GM13977 (cell line): ENCODE measurements at regions of chr6 and their contacts with region 1.

Region 1: DNA sequence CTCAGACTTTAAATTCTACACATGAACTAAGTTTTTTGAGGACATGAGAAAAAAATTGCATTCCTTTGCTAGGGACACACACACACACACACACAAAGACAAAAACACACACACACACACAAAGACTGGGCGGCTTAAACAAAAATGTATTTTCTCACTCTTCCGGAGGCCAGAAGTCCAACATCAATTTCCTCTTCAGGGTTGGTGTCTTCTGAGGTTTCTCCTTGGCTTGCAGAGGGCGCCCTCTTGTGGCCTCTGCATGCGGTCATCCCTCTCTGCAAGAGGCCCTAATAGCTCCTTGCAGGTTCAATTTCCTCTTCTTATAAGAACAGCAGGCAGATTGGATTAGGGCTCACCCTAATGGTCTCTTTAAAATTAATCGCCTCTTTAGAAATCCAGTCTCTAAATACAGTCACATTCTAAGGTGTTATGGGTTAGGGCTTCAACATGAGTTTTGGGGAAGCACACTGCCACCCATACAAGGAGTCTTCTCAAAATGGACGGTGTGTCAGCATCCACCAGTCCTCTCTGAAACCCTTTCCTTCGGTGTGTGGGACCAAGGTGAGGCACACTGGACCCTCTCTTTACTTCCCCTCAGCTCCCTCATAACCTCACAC is 61.4 kb downstream of the GPR6 start:
- DNase-seq: peak; percentile 77
- CTCF ChIP-seq: peak; percentile 93

Region 2: DNA sequence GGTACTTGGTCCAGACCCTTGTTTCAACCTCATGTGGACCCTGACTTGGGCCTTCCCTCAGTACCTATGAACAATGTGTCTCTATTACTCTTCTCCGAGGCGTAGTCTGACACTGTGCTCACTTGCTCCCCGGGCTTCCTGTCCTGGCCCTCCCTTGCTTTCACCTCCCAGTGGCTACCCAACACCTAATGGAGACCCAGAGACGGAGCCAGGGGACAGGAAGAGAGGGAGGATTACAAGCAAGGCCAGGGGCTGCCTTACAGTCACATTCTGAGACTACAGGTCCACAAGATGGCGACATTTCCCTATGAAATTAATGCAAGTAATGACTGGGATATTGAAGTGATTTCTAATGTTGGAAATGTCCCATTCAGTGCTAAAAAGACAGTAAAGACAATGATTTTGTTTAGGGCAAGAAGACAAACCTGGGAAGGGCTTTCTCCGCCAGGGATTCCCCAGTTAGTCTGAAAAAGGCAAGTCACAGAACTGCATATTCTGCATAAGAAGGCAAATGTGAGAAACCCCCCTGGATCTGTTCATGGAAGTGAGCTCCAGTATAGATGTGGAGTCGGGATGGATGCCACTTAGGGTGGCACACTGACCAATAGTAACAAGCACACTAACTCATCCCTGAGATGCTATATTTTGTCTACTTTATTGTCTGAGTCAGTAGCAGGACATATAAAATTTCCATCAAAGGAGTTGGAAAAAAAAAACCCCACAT is 512.4 kb before region 1 on chr6:
- in situ Hi-C with region 1: loop called (anchors 10 kb)
- DNase-seq: peak; percentile 26
- CTCF ChIP-seq: peak; percentile 75

Region 3: DNA sequence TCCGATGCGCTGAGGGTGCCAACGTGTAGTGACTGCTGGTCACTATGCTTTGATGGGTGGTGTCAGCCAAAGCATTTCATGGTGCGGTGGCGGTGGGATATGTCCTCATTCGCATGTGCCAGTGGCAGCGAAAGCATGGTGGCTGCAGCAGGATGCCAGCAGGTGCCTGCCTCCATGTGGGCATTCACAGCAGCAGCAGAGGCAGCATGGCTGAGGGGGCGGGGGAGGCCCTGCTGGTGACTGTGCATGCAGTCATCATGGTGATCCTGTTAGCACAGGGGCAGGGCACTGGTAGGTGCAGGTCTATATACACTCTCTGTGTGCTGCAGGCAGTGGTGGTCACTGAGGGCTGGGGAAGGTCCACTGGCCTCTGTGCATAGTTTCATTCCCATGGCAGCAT is 326.4 kb before region 1 on chr6:
- in situ Hi-C with region 1: loop called (anchors 10 kb)
- DNase-seq: no peak
- CTCF ChIP-seq: no peak